Posterior vena cava (tissue), 2 donors: ENCODE measurements at regions of chr11 and their contacts with region 1.

Region 1: GRCh38 chr11:36010010-36010740 is 66.3 kb downstream of the LDLRAD3 start:
- DNase-seq: no peak

Region 2: GRCh38 chr11:35927730-35928129 is 82.4 kb before region 1 on chr11:
- intact Hi-C with region 1: no loop called
- DNase-seq: peak; percentile 84

Region 3: GRCh38 chr11:35943713-35944655 is 66.2 kb before region 1 on chr11 and contains the start of gene LDLRAD3:
- intact Hi-C with region 1: loop called in 1 of 2 experiments (anchors 10 kb)
- DNase-seq: peak; percentile 92
- total RNA-seq, gene LDLRAD3: 12.4 to 18.4 TPM

Region 4: DNA sequence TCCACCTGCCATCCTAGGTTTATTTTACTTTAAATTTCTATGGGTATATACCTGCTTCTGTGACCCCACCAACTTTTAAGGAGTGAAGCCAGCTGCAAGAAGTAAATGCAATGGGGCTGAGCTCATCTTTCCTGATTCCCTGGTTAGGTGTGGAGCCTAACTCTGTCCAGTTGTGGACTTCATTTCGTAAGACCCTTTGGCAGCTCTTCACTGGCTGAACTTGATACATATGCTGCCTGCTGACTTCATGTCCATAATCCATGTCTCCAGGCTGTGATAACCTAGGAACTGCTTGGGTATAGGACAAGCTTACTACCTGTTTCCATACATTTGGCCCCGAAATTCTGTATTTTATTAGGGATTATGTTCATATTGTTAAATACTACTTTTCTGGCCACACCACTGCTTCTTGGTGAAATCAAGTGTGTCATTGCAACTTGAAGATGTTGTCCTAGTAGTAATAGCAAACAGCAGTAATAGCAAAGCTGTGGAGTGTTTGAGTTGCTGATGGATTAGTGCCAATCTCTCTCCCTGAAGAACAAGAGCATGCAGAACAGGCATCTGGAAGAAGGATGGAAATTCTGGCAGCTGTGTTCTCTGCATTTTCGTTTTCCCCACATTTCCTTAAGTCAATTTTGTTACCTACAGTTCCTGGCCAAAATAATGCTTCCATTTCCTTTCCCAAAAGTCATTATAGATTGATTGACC is 35.1 kb before region 1 on chr11:
- intact Hi-C with region 1: no loop called
- DNase-seq: no peak

Region 5: GRCh38 chr11:35990170-35990569 is 20.0 kb before region 1 on chr11:
- intact Hi-C with region 1: loop called in 1 of 2 experiments (anchors 1 kb)
- DNase-seq: no peak